Heart left ventricle (tissue), 16 donors: ENCODE measurements at regions of chr2 and their contacts with region 1.

Region 1: GRCh38 chr2:85066874-85067351 is 66.3 kb upstream of the TCF7L1 start:
- DNase-seq: peak; percentile 71 to 83 (median 75)
- ATAC-seq: peak; percentile 78 to 88 (median 85)
- H3K4me3 ChIP-seq: peak overlapping the region in 11 of 12 donors; percentile 2 to 59 (median 43)
- H3K27ac ChIP-seq: peak overlapping the region in 3 of 12 donors; percentile 2 to 50 (median 23)
- H3K4me1 ChIP-seq: peaks cover 0 to 9% (median 6%) of the 10 kb centered on the region in 12 donors
- H3K27me3 ChIP-seq: peaks cover 0 to 10% (median 0%) of the 10 kb centered on the region in 9 donors
- CTCF ChIP-seq: peak; percentile 71 to 91 (median 86)
- POLR2A ChIP-seq: no peak

Region 2: GRCh38 chr2:85288244-85288725 is 221.4 kb after region 1 on chr2:
- intact Hi-C with region 1: loop called in 5 of 10 experiments (anchors 1 to 5 kb)
- DNase-seq: no peak
- ATAC-seq: no peak
- H3K4me3 ChIP-seq: no peak overlapping the region
- H3K27ac ChIP-seq: no peak overlapping the region
- H3K4me1 ChIP-seq: peaks cover 0 to 15% (median 5%) of the 10 kb centered on the region in 12 donors
- H3K27me3 ChIP-seq: no peaks in the 10 kb centered on the region
- CTCF ChIP-seq: no peak
- POLR2A ChIP-seq: no peak

Region 3: DNA sequence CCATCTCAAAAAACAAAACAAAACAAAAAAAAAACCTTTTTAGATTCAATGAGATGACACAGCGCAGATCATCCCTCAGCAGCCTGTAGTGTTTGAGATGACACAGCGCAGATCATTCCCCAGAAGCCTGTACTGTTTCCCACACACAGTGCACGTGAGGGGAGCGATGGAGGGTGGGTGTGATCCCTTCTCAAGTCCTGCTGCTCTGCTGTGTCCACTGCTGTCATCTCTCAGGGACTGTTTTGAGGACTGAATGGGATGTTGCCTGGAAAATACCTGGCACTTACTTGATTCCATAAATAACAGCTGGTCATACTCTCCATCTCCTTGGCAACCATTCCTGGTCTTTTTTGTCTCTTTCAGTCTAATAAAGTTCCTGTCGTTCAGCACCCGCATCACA is 235.2 kb after region 1 on chr2:
- intact Hi-C with region 1: loop called in 8 of 10 experiments (anchors 1 to 5 kb)
- DNase-seq: no peak
- ATAC-seq: peak in 2 of 4 donors; percentile 32 to 45
- H3K4me3 ChIP-seq: no peak overlapping the region
- H3K27ac ChIP-seq: no peak overlapping the region
- H3K4me1 ChIP-seq: peaks cover 0 to 10% (median 2%) of the 10 kb centered on the region in 12 donors
- H3K27me3 ChIP-seq: no peaks in the 10 kb centered on the region
- CTCF ChIP-seq: no peak
- POLR2A ChIP-seq: no peak